Heart right ventricle (tissue), 16 donors: ENCODE measurements at regions of chr2 and their contacts with region 1.

Region 1: DNA sequence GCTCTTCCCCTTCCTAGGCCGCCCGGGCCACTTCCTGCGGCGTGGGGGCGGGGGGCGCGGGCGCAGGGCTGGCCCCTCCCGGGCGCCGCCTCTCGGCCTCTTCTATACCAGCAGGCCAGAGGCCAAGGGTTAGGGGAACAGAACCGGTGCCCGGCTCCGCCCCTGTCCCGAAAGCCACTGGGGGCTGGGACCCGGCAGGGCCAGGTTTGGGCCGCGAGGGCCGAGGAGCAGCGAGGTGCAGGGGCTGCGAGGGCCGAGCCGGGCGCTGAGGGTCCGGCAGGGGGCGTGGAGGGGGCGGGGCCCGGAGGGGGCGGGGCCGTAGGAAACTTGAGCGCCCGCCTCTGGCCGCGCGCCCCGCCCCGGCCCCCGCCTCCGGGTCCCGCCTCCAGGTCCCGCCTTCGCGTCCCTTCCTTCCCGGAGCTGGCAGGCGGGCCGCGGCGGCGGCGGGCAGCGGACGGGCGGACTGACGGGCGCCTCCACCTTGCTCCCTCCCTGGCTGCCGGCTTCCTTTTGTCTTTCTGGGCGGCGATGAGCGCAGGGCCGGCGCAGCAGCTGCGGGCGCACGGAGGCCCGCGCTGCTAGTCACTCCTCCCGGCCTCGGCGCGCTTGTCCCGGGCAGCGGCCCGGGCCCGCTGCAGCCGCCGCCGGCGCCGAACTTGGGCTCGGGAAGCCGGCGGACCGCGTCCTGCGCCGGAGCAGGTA is at the start of gene HPCAL1:
- DNase-seq: peak; percentile 88 to 91
- ATAC-seq: peak; percentile 86 to 94 (median 92)
- H3K4me3 ChIP-seq: peak within 1 kb of the TSS; percentile 79 to 98 (median 84)
- H3K27ac ChIP-seq: peak within 1 kb of the TSS in 9 of 10 donors; percentile 67 to 90 (median 88)
- H3K4me1 ChIP-seq: peaks cover 0 to 65% (median 37%) of the 10 kb centered on the region in 9 donors
- H3K27me3 ChIP-seq: no peaks in the 10 kb centered on the region
- CTCF ChIP-seq: peak; percentile 33 to 85 (median 66)
- total RNA-seq, gene HPCAL1: 15.8 to 49.2 (median 22.8) TPM

Region 2: GRCh38 chr2:10122386-10123280 is 180.0 kb before region 1 on chr2 and contains the start of gene RRM2:
- intact Hi-C with region 1: loop called in 2 of 10 experiments (anchors 5 to 10 kb)
- DNase-seq: peak; percentile 92 to 93
- ATAC-seq: peak; percentile 89 to 94 (median 92)
- H3K4me3 ChIP-seq: peak within 1 kb of the TSS; percentile 39 to 77 (median 54)
- H3K27ac ChIP-seq: peak within 1 kb of the TSS in 1 of 10 donors; percentile 77
- H3K4me1 ChIP-seq: peaks cover 14 to 73% (median 29%) of the 10 kb centered on the region in 9 donors
- H3K27me3 ChIP-seq: peaks cover 11 to 27% (median 18%) of the 10 kb centered on the region in 7 donors
- CTCF ChIP-seq: no peak
- total RNA-seq, gene RRM2: 0.08 to 18.7 (median 1.3) TPM

Region 3: DNA sequence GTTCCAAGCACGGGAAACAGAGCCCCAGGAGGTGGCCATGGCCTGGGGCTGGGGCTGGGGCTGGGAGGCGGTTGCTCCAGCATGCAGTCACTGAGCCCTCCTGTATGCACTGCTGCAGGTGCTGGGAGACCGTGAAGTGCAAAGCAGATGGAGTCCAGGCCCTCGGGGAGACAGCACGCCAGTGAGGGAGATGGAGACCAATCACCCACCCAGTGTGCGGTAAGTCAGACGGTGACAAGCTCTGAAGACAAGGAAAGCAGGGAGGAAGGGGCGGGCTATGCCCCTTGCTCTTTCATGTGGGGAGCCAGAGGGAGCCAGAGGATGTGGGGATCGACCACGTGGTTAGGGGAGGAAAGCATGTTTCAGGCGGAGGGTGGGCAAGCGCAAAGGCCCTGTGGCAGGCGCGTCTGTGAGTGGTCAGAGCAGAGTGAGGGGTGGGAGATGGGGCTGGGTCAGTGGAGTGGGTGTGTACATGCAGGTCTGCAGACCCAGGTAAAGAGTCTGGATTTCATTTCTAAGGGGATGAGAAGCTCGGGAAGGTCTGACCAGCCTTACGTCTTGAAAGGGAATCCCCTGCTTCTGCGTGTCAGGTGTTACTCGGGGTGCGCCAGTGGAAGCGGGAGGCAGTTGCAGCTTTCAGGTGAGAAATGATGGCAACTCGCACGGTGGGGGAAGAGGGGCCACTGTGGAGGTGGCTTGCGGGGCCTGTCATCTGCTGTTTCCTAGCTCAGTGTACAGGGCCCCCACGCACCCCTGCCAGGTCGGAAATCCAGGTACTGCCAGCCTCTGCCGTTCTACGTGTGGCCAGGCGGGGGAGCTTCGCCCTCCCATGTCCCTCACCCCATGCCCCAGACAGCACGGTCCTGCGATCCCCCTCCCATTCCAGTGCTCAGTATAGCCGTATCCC is 160.6 kb before region 1 on chr2:
- intact Hi-C with region 1: loop called in 3 of 10 experiments (anchors 5 to 10 kb)
- DNase-seq: peak in 1 of 2 donors; percentile 38
- ATAC-seq: peak in 5 of 8 donors; percentile 32 to 59 (median 49)
- H3K4me3 ChIP-seq: no peak overlapping the region
- H3K27ac ChIP-seq: no peak overlapping the region
- H3K4me1 ChIP-seq: peaks cover 0 to 17% (median 9%) of the 10 kb centered on the region in 9 donors
- H3K27me3 ChIP-seq: no peaks in the 10 kb centered on the region
- CTCF ChIP-seq: peak; percentile 24 to 63 (median 56)

Region 4: GRCh38 chr2:10331027-10331701 is 28.5 kb after region 1 on chr2:
- intact Hi-C with region 1: loop called in 2 of 10 experiments (anchors 2 kb)
- DNase-seq: peak; percentile 57 to 77
- ATAC-seq: peak; percentile 45 to 88 (median 69)
- H3K4me3 ChIP-seq: peak overlapping the region in 7 of 10 donors; percentile 13 to 46 (median 32)
- H3K27ac ChIP-seq: peak overlapping the region in 8 of 10 donors; percentile 47 to 84 (median 65)
- H3K4me1 ChIP-seq: peaks cover 0 to 70% (median 66%) of the 10 kb centered on the region in 9 donors
- H3K27me3 ChIP-seq: no peaks in the 10 kb centered on the region
- CTCF ChIP-seq: peak in 4 of 9 donors; percentile 10 to 12 (median 11)

Region 5: DNA sequence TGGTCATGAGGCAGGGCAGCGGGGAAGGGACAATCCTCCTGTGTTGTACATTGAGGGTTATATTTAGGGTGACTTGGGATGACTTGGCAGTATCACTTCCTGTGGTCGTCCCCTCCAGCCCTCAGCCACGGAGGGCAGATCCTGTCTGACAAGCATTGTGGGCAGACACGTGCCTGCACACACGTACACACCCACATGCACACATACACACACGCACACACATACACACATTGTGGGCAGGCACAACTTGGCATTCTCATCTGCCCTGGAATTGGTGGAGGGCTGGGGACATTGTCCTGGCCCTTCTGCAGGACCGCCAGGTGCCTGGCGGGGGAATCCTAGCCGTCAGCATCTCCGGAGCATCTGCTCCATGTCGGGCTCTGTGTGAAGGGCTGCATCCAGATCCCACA is 97.9 kb after region 1 on chr2:
- intact Hi-C with region 1: loop called in 4 of 10 experiments (anchors 5 to 10 kb)
- DNase-seq: peak in 1 of 2 donors; percentile 50
- ATAC-seq: peak in 6 of 8 donors; percentile 1 to 36 (median 30)
- H3K4me3 ChIP-seq: no peak overlapping the region
- H3K27ac ChIP-seq: peak overlapping the region in 9 of 10 donors; percentile 42 to 85 (median 74)
- H3K4me1 ChIP-seq: peaks cover 19 to 81% (median 64%) of the 10 kb centered on the region in 9 donors
- H3K27me3 ChIP-seq: no peaks in the 10 kb centered on the region
- CTCF ChIP-seq: no peak